Heart left ventricle (tissue), 16 donors: ENCODE measurements at regions of chr1 and their contacts with region 1.

Region 1: GRCh38 chr1:156797212-156797871 is 19.3 kb downstream of the SH2D2A start:
- DNase-seq: no peak
- ATAC-seq: no peak
- H3K4me3 ChIP-seq: no peak overlapping the region
- H3K27ac ChIP-seq: no peak overlapping the region
- H3K4me1 ChIP-seq: peaks cover 0 to 24% (median 16%) of the 10 kb centered on the region in 12 donors
- H3K27me3 ChIP-seq: no peaks in the 10 kb centered on the region
- CTCF ChIP-seq: peak; percentile 44 to 70 (median 66)
- POLR2A ChIP-seq: no peak

Region 2: GRCh38 chr1:156476501-156477298 is 320.6 kb before region 1 on chr1:
- intact Hi-C with region 1: no loop called
- DNase-seq: peak in 3 of 5 donors; percentile 51 to 78 (median 71)
- ATAC-seq: peak in 3 of 4 donors; percentile 12 to 33 (median 25)
- H3K4me3 ChIP-seq: no peak overlapping the region
- H3K27ac ChIP-seq: peak overlapping the region in 11 of 12 donors; percentile 54 to 89 (median 82)
- H3K4me1 ChIP-seq: peaks cover 7 to 89% (median 63%) of the 10 kb centered on the region in 12 donors
- H3K27me3 ChIP-seq: no peaks in the 10 kb centered on the region
- CTCF ChIP-seq: no peak
- POLR2A ChIP-seq: no peak

Region 3: DNA sequence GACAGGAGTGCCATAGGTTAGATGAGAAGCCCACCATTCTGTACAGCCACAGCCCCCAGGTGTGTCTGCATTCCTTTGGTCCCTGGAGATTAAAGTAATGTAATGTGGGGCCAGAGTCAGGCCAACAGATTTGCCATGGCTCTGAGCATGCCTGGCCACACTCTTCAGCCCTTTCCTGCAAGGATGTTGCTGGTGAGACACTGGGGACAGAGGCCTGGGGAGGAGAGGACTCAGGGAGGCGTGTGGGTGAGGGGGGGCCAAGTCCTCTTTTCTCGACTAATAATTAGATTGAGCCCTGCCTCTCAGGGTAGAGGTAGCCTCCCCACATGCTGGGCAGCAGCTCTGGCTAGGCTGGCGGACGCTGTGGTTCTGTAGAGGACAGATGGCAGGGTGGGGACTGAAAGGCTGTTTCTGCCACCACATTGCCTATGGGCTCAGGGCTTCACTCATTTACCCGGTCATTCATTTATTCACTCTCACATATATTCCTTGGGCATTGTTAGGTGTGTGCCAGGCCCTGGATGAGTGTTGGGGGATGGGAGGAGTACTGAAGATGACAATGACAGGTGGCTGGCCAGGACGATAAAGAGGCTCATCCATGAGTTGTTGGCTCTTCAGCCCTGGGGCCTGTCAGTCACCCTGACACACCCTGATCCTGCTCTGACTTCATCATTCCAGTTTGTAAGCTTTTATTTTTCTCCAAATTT is 37.1 kb before region 1 on chr1:
- intact Hi-C with region 1: no loop called
- DNase-seq: no peak
- ATAC-seq: peak in 1 of 4 donors; percentile 22
- H3K4me3 ChIP-seq: no peak overlapping the region
- H3K27ac ChIP-seq: no peak overlapping the region
- H3K4me1 ChIP-seq: peaks cover 0 to 7% (median 0%) of the 10 kb centered on the region in 12 donors
- H3K27me3 ChIP-seq: no peaks in the 10 kb centered on the region
- CTCF ChIP-seq: no peak
- POLR2A ChIP-seq: no peak

Region 4: DNA sequence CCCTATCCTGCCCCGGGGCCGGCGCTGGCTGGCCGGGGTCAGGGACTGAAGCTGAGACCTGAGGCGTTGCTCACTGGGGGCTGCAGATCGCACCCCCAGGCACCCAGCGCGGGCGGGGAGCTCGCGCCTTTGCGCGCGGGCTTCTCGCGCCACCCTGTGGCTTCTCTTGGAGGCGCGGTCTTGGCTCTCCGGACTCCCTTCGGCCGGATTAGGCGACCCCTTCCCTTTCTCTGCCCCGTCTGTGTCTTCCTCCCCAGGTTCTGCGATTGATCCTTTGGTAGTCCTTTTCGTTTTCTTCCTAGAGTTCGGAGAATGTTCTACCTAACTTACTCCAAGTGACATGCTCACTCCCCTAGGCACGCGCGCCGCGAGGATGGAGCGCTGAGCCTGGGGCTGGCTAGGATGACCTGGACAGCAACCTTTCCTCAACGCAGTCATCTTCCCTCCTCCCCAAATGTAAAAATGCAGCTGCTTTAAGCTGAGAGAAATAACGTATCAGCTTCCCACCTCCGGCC is 62.8 kb after region 1 on chr1:
- intact Hi-C with region 1: loop called in 9 of 10 experiments (anchors 1 to 5 kb)
- DNase-seq: peak in 3 of 5 donors; percentile 30 to 59 (median 41)
- ATAC-seq: peak; percentile 28 to 80 (median 60)
- H3K4me3 ChIP-seq: peak overlapping the region; percentile 16 to 56 (median 40)
- H3K27ac ChIP-seq: no peak overlapping the region
- H3K4me1 ChIP-seq: peaks cover 12 to 37% (median 29%) of the 10 kb centered on the region in 12 donors
- H3K27me3 ChIP-seq: peaks cover 6 to 63% (median 34%) of the 10 kb centered on the region in 9 donors
- CTCF ChIP-seq: peak; percentile 70 to 93 (median 82)
- POLR2A ChIP-seq: no peak

Region 5: DNA sequence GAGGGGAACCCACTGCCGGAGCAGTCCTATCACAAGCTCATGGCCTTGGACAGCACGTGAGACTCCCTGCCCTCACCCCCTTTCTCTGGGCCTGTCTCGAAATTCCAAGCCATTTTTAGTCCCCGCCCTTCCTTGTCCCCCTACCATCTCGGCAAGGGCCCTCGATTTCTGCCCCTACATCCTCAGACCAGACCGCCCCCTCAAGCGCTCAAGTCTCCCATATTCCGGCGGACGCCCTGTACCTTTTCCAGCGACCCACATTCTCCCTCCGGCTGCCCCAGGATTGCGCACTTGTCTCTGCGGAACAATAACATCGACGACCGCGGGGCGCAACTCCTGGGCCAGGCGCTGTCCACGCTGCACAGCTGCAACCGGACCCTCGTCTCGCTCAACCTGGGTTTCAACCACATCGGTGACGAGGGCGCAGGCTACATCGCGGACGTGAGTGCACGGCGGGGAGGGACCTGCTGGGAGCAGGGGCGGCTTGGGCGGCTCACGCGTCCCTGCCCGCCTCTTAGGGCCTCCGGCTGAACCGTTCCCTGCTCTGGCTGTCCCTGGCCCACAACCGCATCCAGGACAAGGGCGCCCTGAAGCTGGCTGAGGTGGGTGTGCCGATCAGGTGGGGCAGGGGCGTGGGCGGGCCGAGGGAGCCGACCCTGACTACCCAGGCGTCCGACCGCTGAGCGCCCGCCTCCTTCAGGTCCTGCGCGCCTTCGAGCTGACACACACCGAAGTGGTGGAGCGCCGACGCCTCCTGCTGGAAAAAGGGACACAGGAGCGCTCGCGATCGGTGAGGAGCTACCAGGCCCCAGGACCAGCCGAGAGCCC is 130.1 kb after region 1 on chr1:
- intact Hi-C with region 1: loop called in 1 of 10 experiments (anchors 10 kb)
- DNase-seq: peak; percentile 65 to 88 (median 68)
- ATAC-seq: peak; percentile 35 to 71 (median 55)
- H3K4me3 ChIP-seq: peak overlapping the region in 10 of 12 donors; percentile 27 to 41 (median 31)
- H3K27ac ChIP-seq: no peak overlapping the region
- H3K4me1 ChIP-seq: peaks cover 4 to 42% (median 19%) of the 10 kb centered on the region in 12 donors
- H3K27me3 ChIP-seq: peaks cover 24 to 69% (median 53%) of the 10 kb centered on the region in 9 donors
- CTCF ChIP-seq: peak; percentile 40 to 77 (median 64)
- POLR2A ChIP-seq: no peak